ENCODE measurements at regions of chr16 and their contacts with region 1.

Region 1: DNA sequence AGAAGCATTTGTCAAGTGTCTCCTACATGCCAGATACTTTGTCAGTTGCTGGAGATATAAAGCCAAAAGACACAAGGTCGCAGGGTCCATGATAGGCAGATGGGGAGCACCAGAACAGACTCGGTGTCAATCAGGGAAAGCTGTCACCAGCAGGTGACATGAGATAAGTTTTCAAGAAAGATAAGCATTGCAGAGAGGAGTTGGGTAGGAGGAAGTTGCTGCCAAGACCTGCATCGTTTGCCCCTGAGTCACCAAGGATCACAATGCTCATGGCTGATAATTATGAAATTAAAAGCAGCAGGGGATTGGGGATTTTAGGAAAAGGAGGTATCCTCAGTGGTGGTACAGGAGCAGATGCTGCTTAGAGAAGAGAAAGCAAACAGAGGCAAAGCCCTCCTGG is 551.1 kb upstream of the CDH11 start:
- DNase-seq: no peak
- ATAC-seq: peak in 1 of 2 donors; percentile 60

Region 2: DNA sequence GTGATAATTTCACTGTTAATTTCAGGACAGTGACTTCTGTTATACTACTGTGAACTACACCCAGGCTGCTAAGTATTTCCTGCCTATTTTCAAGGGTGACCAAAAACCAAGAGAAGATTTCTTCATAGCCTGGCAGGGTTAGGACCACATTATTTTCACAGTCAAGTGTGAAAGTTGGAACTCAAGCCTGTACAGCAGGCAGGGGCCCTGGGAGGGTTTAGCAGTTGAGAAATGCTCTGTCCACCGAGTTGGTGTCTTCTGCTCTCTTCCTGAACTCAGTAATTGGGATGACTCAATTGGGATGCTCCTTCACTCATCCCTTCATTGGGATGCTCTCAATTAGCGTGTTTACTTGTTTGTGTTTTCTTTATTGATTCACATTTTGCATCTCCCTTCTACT is 203.8 kb before region 1 on chr16:
- intact Hi-C with region 1: no loop called
- DNase-seq: no peak
- ATAC-seq: peak in 1 of 2 donors; percentile 53

Region 3: DNA sequence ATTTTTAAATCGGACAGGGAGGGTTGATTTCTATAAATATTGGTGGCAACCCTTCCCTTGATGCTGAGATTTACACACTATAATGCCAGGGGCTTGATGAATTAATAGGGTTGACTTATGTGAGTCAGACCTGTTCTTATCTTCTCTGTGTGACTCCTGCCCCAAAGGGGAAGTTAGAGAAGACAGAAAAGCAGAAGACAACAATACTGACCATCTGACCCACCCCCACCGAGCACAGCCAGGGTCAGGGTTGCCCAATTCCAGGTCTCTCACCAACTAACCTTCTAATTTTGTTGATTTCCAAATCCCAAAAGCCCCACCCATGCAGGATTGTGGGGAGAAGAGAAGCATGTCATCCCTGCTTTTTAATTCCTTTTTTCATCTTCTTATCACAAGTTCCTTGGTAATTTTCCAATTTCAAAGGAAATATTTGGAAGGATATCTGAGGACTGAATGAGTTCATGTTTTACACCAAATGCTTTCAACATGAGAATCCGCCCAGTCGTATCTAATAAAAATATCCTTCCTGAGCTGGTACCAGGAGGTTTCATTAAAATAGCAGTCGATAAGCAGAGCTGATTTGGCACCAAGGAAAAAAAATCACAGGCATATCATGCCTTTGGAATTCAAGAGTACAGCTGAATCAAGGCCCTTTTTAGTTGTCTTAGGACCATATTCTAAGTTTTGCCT is 52.3 kb after region 1 on chr16:
- intact Hi-C with region 1: loop called in 1 of 2 experiments (anchors 10 kb)
- DNase-seq: peak; percentile 33
- ATAC-seq: peak; percentile 38 to 95

Region 4: GRCh38 chr16:65793781-65794180 is 120.8 kb after region 1 on chr16:
- intact Hi-C with region 1: no loop called
- DNase-seq: no peak
- ATAC-seq: no peak

Measured in left cardiac atrium (tissue), 4 donors.